ENCODE measurements at regions of chr1 and their contacts with region 1.

Region 1: DNA sequence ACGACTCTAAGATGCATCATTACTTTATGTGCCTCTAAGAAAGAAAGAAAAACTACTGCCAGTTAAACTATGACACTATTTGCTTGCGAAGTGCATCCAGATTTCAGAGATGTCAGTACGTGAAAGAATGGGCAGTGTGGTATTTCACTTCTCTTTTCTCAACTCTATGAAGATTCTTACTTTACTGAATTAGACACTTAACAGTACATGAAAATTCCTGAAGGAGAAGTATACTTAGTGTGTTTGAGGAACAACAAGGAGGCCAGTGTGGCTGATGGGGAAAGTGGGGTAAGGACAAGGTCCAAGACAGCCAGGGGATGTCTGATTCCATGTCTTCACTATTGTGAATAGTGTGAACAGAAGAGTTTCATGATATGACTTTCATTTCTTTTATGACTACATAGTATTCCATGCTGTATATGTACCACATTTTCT is 53.9 kb upstream of the HSD17B7 start:
- DNase-seq: no peak
- ATAC-seq: no peak
- H3K4me3 ChIP-seq: no peak overlapping the region
- H3K27ac ChIP-seq: no peak overlapping the region
- H3K4me1 ChIP-seq: peaks cover 0 to 29% (median 11%) of the 10 kb centered on the region in 12 donors
- H3K27me3 ChIP-seq: no peaks in the 10 kb centered on the region
- CTCF ChIP-seq: no peak
- POLR2A ChIP-seq: no peak

Region 2: DNA sequence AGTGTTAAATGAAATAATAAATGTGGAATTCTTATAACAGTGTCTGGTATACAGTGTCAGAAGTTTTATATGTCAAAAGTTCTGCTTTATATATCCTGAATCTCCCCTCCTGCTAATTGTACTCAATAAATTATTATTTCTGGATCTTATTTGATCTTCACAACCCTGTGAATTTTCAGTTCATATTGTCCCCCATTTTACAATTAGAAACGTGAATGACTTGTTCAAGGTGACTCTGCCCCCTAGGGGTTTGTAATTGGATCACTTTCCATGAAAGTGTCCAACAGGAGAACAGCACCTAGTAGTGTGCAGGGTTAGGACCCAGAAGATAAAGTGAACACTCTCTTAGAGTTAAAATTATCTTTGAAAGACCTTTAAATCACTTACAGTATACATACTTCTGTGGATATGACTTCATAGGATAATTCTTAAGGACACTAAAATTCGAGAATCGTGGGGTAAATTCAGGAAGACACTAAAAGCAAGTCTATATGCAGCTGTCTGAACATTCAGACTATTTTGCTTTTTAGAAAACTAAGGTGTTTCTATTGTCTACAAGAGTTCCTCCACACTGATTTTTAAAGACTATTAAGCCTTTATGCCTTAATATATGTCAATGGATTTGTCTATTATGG is 108.9 kb before region 1 on chr1:
- intact Hi-C with region 1: loop called in 1 of 10 experiments (anchors 10 kb)
- DNase-seq: no peak
- ATAC-seq: no peak
- H3K4me3 ChIP-seq: no peak overlapping the region
- H3K27ac ChIP-seq: peak overlapping the region in 1 of 12 donors; percentile 87
- H3K4me1 ChIP-seq: peaks cover 0 to 37% (median 11%) of the 10 kb centered on the region in 12 donors
- H3K27me3 ChIP-seq: no peaks in the 10 kb centered on the region
- CTCF ChIP-seq: peak in 9 of 12 donors; percentile 5 to 52 (median 30)
- POLR2A ChIP-seq: no peak

Region 3: GRCh38 chr1:162696286-162696862 is 40.3 kb before region 1 on chr1:
- intact Hi-C with region 1: loop called in 1 of 10 experiments (anchors 10 kb)
- DNase-seq: peak; percentile 75 to 91 (median 82)
- ATAC-seq: peak; percentile 94 to 98 (median 97)
- H3K4me3 ChIP-seq: peak overlapping the region in 3 of 12 donors; percentile 1 to 7 (median 2)
- H3K27ac ChIP-seq: peak overlapping the region; percentile 53 to 92 (median 76)
- H3K4me1 ChIP-seq: peaks cover 0 to 66% (median 23%) of the 10 kb centered on the region in 12 donors
- H3K27me3 ChIP-seq: no peaks in the 10 kb centered on the region
- CTCF ChIP-seq: no peak
- POLR2A ChIP-seq: no peak

Measured in heart left ventricle (tissue), 16 donors.